A549 (cell line): ENCODE measurements at regions of chr15 and their contacts with region 1.

Region 1: GRCh38 chr15:89299896-89300295 is 34.7 kb downstream of the POLG start:
- DNase-seq: peak in 1 of 2 experiments; percentile 38
- ATAC-seq: peak; percentile 80 to 87
- H3K4me3 ChIP-seq: no peak overlapping the region
- H3K27ac ChIP-seq: no peak overlapping the region
- H3K4me1 ChIP-seq: no peaks in the 10 kb centered on the region
- CTCF ChIP-seq: peak; percentile 56
- EP300 ChIP-seq: no peak
- POLR2A ChIP-seq: no peak
- RAD21 ChIP-seq: peak; percentile 48 to 60

Region 2: GRCh38 chr15:89197503-89197971 is 102.4 kb before region 1 on chr15:
- CTCF ChIA-PET with region 1: interaction called, 155 read pairs
- POLR2A ChIA-PET with region 1: no interaction called
- DNase-seq: no peak
- ATAC-seq: no peak
- H3K4me3 ChIP-seq: no peak overlapping the region
- H3K27ac ChIP-seq: no peak overlapping the region
- H3K4me1 ChIP-seq: no peaks in the 10 kb centered on the region
- CTCF ChIP-seq: no peak
- EP300 ChIP-seq: no peak
- POLR2A ChIP-seq: no peak
- RAD21 ChIP-seq: no peak

Region 3: DNA sequence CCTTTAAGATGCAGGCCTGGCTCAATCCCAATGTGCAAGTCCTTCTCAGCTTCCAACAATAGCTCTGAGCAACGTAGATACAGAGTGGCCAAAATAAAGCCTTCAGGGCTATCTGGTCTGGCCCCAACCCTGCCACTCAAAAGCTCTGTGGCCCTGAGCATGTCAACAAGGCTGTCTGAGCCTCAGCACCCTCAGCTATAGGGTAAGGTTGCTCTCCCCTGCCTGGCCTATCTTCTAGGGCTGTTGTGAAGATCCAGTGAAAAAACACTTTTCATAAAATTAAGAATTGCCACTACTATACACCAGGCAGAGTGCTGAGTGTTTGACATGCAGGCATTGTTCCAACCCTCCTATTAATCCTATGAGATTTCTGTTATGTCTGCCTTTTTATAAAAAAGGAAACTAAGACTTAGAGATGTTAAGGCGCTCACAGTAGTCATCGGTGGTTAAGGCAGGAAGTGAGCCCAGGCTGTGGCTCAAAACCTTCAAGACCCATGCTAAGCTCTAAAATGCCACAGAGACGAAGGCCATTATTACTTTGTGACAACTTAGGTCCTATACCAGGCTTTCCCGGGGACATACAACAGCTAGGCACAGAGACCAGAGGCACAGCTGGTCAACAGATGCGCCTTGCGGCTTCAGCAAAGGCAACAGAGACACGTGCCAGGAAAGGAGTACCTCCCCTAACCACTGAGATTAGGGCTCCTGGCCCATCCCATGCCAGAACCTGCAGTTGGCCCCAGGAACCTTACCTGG is 29.6 kb after region 1 on chr15:
- CTCF ChIA-PET with region 1: interaction called, 10 read pairs
- POLR2A ChIA-PET with region 1: no interaction called
- DNase-seq: no peak
- ATAC-seq: no peak
- H3K4me3 ChIP-seq: no peak overlapping the region
- H3K27ac ChIP-seq: no peak overlapping the region
- H3K4me1 ChIP-seq: peaks cover 31% of the 10 kb centered on the region
- CTCF ChIP-seq: no peak
- EP300 ChIP-seq: no peak
- POLR2A ChIP-seq: no peak
- RAD21 ChIP-seq: no peak